SK-N-SH (cell line): ENCODE measurements at regions of chr9 and their contacts with region 1.

Region 1: DNA sequence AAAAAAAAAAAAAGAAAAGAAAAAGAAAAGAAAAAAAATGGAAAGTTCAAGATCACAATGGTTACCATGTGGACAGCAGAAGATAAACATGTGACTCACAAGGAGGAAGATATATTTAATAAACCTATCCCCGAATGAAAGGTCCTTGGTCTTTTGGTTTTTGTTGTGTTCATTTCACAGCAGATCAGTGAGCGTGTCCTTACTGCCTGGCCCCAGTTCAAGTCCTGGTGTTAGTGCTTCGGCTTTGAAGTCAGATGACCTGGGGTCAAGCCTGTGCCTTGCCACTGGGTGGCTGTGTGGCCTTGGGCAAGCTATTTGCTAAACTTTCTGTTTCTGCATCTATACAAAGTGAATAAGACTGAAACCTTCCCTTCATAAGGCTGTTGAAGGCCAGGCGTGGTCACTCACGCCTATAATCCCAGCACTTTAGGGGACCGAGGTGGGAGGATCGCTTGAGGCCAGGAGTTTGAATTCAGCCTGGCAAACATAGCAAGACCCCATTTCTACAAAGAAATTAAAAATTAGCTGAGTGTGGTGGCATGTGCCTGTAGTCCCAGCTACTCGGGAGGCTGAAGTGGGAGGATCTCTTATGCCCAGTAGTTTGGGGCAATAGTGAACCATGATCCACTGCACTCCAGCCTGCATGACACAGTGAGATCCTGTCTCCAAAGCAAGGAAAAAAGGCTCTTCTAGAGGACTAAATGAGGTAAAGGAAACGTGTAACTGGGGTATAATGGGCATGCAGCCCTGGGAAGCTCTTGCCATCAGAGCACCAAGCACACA is 94.5 kb upstream of the SPATA31D4 start:
- DNase-seq: no peak
- H3K4me3 ChIP-seq: no peak overlapping the region
- H3K27ac ChIP-seq: no peak overlapping the region
- H3K4me1 ChIP-seq: no peaks in the 10 kb centered on the region
- H3K27me3 ChIP-seq: no peaks in the 10 kb centered on the region
- CTCF ChIP-seq: no peak
- EP300 ChIP-seq: no peak
- RAD21 ChIP-seq: no peak

Region 2: DNA sequence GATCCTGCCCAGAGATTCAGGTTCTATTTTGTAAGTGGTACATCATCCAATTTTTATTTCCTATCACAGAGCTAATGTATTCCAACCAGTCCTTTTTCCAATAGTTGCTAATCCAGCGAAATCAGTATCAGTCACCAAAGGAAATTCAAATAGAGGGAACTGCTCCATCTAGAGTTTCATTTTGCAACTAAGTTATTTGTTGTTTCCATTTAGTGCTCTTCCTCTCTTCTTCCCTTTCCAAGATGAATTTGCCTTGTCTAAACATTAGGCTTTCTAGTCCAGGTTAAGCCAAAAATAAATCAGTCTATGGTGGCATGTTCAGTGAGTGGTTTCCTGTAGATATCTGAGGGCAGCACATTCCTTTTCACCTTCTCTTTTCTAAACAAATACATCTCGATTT is 14.7 kb after region 1 on chr9:
- CTCF ChIA-PET with region 1: interaction called, 10 read pairs
- POLR2A ChIA-PET with region 1: no interaction called
- DNase-seq: no peak
- H3K4me3 ChIP-seq: no peak overlapping the region
- H3K27ac ChIP-seq: no peak overlapping the region
- H3K4me1 ChIP-seq: 0 out of 4 replicates have a peak, but pooled peaks cover 0 to 5% of the 10 kb centered on the region in 2 experiments
- H3K27me3 ChIP-seq: no peaks in the 10 kb centered on the region
- CTCF ChIP-seq: peak; percentile 58
- EP300 ChIP-seq: no peak
- RAD21 ChIP-seq: peak; percentile 53